B cell (primary cell): ENCODE measurements at regions of chr11 and their contacts with region 1.

Region 1: DNA sequence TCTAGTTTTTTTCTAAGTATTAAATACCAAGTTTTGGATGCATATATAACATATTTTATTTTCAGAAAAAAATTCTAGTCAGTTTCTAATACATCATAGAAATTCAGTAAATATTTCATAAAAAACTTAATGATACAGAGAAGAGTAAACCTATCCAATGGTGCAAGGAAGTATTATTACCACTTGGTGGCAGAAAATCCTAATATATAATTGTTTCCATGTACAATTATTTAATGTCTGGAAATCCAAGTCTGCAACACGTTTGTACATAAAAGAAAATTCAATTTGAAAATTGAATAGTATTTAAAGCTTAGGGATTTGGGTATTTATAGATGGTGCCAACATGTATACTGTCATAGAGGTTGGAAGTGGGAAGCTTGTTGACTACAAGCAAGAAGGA is 127.0 kb downstream of the TRPC6 start:
- DNase-seq: peak; percentile 13
- ATAC-seq: no peak
- H3K4me3 ChIP-seq: no peak overlapping the region
- H3K4me3 Mint-ChIP-seq: no peak overlapping the region
- H3K27ac ChIP-seq: no peak overlapping the region
- H3K27ac Mint-ChIP-seq: no peak overlapping the region
- H3K4me1 ChIP-seq: no peaks in the 10 kb centered on the region
- H3K4me1 Mint-ChIP-seq: no peaks in the 10 kb centered on the region
- H3K27me3 ChIP-seq: no peaks in the 10 kb centered on the region
- H3K27me3 Mint-ChIP-seq: peaks cover under 1% of the 10 kb centered on the region
- CTCF ChIP-seq: peak; percentile 24

Region 2: DNA sequence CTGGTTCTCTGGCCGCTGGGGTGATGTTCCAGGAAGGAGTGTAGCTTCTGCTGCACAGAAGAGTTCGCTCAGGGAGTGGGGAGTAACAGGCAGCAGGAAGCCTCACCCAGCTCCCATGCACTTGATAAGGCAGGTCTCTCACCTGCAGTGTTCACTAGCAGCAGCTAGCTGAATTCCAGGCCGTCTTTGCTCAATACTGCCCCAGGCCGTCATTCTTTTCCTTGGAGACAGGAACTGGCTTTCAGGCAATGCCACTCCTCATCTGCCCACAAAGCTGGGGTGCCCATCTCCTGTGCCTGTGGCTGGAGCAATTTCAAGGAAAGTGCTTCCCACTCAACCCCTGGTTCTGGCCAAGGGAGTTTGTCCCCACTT is 703.7 kb before region 1 on chr11:
- CTCF ChIA-PET with region 1: no interaction called
- POLR2A ChIA-PET with region 1: no interaction called
- intact Hi-C with region 1: no loop called
- DNase-seq: no peak
- ATAC-seq: no peak
- H3K4me3 ChIP-seq: no peak overlapping the region
- H3K4me3 Mint-ChIP-seq: no peak overlapping the region
- H3K27ac ChIP-seq: no peak overlapping the region
- H3K27ac Mint-ChIP-seq: no peak overlapping the region
- H3K4me1 ChIP-seq: no peaks in the 10 kb centered on the region
- H3K4me1 Mint-ChIP-seq: no peaks in the 10 kb centered on the region
- H3K27me3 ChIP-seq: no peaks in the 10 kb centered on the region
- H3K27me3 Mint-ChIP-seq: no peaks in the 10 kb centered on the region
- CTCF ChIP-seq: no peak

Region 3: GRCh38 chr11:101166038-101166437 is 290.8 kb before region 1 on chr11:
- CTCF ChIA-PET with region 1: no interaction called
- POLR2A ChIA-PET with region 1: no interaction called
- intact Hi-C with region 1: no loop called
- DNase-seq: no peak
- ATAC-seq: no peak
- H3K4me3 ChIP-seq: no peak overlapping the region
- H3K4me3 Mint-ChIP-seq: no peak overlapping the region
- H3K27ac ChIP-seq: no peak overlapping the region
- H3K27ac Mint-ChIP-seq: no peak overlapping the region
- H3K4me1 ChIP-seq: no peaks in the 10 kb centered on the region
- H3K4me1 Mint-ChIP-seq: no peaks in the 10 kb centered on the region
- H3K27me3 ChIP-seq: no peaks in the 10 kb centered on the region
- H3K27me3 Mint-ChIP-seq: peaks cover 5% of the 10 kb centered on the region
- CTCF ChIP-seq: no peak

Region 4: GRCh38 chr11:101848262-101848661 is 391.4 kb after region 1 on chr11:
- CTCF ChIA-PET with region 1: interaction called, 17 read pairs
- POLR2A ChIA-PET with region 1: no interaction called
- intact Hi-C with region 1: no loop called
- DNase-seq: peak; percentile 11
- ATAC-seq: no peak
- H3K4me3 ChIP-seq: no peak overlapping the region
- H3K4me3 Mint-ChIP-seq: no peak overlapping the region
- H3K27ac ChIP-seq: no peak overlapping the region
- H3K27ac Mint-ChIP-seq: no peak overlapping the region
- H3K4me1 ChIP-seq: no peaks in the 10 kb centered on the region
- H3K4me1 Mint-ChIP-seq: no peaks in the 10 kb centered on the region
- H3K27me3 ChIP-seq: peaks cover 0 to 4% (median 0%) of the 10 kb centered on the region in 4 experiments
- H3K27me3 Mint-ChIP-seq: peaks cover 8% of the 10 kb centered on the region
- CTCF ChIP-seq: peak; percentile 28